BJ (cell line): ENCODE measurements at regions of chr2 and their contacts with region 1.

Region 1: GRCh38 chr2:8862230-8862629 is 24.8 kb upstream of the KIDINS220 start:
- DNase-seq: no peak
- H3K4me3 ChIP-seq: no peak overlapping the region
- H3K27me3 ChIP-seq: no peaks in the 10 kb centered on the region
- CTCF ChIP-seq: no peak

Region 2: DNA sequence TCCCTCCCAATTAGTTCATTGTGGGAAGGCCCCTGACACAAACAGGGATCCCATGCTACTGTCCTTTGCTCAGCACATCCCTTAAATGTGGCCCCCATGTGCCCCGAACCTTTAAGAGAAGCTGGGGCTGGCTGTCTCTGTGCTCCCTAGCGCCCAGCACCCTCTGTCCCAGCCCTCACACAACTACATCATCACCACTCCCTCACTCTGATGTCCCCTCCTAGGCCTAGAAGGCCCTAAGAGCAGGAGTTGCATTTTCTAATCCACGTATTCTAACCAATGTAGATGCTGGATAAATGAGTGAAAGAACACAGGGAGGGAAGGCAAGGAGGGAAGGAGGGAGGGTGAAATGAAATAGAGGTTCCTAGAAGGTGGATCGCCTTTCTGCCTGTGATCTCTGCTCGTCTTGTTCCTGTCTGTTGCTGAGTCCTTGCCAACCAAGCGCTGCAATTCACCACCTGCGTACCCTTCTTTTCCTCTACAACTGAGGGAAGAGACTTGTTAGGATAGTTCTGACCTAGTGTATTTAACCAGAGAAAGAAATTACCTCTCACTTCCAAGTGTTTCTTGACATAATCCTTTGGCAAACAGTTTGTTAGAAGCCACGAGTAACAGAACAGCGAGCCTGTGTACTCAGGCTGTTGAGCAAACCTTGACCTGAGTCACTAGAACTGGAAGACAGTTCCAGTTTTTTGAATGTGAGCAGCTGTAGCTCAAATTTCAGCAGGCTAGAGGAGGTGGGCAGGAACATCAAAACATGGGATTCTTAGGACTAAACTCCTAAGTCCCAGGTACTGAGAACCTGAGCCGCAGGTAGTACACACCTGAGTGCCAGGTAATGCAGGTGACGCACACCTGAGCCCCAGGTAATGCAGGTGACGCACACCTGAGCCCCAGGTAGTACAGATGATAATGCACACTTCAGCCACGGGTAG is 361.8 kb before region 1 on chr2:
- CTCF ChIA-PET with region 1: no interaction called
- POLR2A ChIA-PET with region 1: no interaction called
- DNase-seq: no peak
- H3K4me3 ChIP-seq: no peak overlapping the region
- H3K27me3 ChIP-seq: no peaks in the 10 kb centered on the region
- CTCF ChIP-seq: no peak

Region 3: DNA sequence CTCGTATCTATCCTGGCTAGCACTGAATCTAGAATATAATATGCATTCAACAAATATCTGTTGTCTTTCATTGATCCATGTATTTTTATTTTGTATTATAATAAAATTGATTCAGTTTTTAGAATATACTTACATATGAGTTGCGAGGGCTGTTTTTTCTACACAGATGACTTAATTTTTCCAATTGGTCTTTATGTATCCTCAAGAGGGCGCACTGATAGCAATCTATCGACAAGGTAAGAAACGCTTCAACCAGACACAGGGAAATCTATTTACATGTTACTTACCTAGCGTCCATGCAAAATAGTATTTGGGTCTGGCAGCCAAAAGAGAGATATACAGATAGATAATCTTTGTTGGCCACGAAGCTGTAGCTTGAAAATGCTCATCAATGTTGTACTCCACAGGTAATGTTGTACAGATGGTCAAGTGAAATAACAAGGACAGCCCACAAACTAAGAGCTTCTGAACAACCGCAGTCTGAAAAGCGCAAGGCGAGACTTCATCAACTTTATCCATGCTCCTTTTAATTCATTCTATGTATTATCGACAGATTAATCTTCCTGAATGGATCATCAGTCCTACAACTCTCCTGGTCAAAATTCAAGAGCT is 10.7 kb after region 1 on chr2:
- CTCF ChIA-PET with region 1: interaction called, 16 read pairs
- POLR2A ChIA-PET with region 1: no interaction called
- DNase-seq: peak; percentile 11
- H3K4me3 ChIP-seq: no peak overlapping the region
- H3K27me3 ChIP-seq: no peaks in the 10 kb centered on the region
- CTCF ChIP-seq: peak; percentile 63